GM10248 (cell line): ENCODE measurements at regions of chr6 and their contacts with region 1.

Region 1: GRCh38 chr6:127302728-127303660 is 36.3 kb downstream of the RNF146 start:
- DNase-seq: peak; percentile 42
- CTCF ChIP-seq: peak; percentile 76

Region 2: DNA sequence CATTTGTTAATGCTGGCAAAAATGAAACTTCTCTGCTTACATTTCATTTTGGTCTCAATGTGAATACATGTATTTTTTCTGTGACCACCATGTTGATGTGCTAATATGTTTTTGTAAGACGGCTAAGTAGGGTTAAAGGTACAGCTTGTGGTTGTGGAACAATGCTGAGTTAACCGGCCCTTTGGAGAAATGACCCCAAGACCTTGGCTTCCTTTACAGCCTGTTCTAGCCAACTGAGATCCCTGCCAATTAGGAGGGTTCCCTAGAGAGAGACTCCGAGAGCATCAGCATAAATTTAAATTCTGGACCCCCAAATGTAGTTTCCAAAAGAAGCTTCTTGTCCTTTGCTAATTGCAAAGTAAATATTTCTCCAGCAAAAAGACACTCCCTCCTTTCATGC is 140.2 kb before region 1 on chr6:
- CTCF ChIA-PET with region 1: no interaction called
- POLR2A ChIA-PET with region 1: no interaction called
- DNase-seq: no peak
- CTCF ChIP-seq: no peak

Region 3: DNA sequence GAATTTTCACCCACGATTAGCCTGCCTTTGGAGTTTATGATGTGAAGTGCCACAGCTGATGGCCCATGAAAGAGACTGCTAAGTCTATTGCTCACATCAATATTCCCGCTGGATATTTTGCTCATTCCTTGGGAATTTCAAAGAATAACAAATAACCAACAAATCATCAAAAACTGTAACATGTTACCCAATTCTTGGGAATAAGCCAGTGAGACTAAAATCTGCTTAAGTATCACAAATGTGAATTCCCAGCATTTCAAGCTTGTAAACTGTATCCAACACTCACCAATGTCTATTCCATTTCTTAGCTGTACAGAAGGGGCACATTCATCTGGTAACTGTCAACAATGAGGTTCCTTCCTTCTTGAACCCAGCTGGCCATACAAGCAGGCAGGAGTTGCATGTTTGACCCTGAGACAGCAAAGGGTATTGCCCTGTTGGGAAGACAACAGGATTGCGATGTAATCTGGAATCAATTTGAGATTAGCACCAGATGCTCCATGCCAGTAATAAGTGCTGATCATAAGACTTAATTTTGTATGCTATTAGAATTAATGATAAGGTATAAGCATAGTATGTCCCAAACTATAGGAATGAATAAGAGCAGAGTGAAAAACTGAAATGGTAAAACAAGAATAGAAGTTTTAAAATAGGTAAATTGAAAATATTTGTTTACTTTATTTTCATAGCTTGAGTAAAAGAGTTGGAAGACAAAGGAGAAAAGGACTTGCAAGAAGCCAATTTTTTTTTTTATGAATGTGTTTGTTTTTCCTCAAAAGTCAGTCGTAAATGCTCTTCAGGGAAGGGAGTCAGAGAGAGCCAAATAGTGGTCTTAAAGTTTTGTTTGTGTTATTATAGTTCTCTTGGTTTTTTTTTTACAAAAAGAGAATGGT is 125.7 kb before region 1 on chr6:
- CTCF ChIA-PET with region 1: no interaction called
- POLR2A ChIA-PET with region 1: no interaction called
- DNase-seq: no peak
- CTCF ChIP-seq: no peak

Region 4: DNA sequence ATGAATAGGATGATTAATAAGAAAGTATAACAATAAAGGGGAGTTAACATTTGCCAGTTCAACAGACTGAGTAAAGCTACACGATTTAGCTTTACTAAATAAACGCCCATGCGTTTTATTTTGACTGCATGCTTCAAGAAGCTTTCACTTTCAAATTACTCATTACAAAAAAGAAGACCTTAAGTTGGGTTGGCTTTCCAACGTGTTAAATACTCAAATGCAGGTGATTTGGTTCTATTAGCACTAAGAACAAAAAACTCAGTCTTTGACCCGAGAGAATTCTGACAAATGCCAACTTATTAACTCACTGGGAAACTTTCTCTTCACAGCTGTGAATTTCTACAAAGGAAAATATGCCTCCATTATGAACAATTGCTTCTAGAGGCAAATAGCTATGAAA is 11.5 kb before region 1 on chr6:
- CTCF ChIA-PET with region 1: interaction called, 68 read pairs
- POLR2A ChIA-PET with region 1: no interaction called
- DNase-seq: peak; percentile 22
- CTCF ChIP-seq: no peak

Region 5: DNA sequence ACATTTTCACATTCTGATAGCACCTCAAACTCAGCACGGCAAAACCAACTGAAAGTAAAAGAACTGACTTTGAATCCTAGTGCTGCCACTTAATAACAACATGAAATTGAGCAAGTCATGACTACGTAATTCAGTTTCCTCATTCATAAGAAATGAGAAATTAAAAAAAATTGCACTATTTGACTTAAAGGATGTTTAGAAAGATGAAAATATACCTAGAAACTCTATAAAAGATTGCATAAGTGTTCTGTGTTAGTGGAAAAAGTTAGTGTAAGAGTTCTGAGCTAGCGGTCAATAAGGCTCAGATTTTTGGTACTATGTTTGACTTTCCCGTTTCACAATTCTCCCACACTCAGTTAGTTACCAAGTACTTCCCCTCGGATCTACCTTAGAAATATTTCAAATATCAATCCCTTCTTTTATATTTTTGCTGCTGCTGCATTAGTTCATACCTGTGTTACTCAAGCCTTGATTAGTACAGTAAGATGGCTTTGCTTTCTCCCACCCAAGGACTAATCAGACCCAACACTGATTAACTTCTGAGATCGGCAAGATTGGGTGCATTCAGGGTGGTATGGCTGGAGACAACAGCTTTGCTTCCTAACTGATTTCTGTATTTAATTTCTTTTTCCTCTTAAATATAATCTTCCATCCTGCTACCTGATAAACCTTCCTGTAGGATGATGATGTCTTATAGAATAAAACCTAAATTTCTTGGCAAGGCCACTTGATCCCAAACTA is 14.6 kb after region 1 on chr6:
- CTCF ChIA-PET with region 1: interaction called, 60 read pairs
- POLR2A ChIA-PET with region 1: no interaction called
- DNase-seq: no peak
- CTCF ChIP-seq: no peak

Region 6: DNA sequence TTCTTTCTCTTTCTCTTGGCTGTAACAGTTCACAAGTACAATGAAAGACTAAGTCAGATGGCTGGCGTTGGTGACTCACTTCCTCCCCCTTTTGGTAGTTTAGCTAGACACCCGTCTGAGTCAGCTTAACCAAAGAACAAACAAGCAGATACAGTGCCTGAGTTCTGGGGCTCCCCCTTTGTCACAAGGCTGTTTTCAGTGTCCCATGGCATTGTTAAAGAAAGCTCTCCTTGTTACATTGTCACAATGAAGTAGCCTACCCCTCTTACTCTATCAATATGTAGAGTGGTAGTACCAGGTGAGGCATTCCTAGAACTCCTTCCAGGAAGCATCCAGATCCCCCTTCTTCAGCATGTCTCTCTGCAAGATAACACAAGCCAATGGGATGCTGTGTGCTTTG is 117.6 kb after region 1 on chr6:
- CTCF ChIA-PET with region 1: interaction called, 18 read pairs
- POLR2A ChIA-PET with region 1: no interaction called
- DNase-seq: peak; percentile 83
- CTCF ChIP-seq: peak; percentile 69

Region 7: GRCh38 chr6:127539272-127539671 is 236.3 kb after region 1 on chr6:
- CTCF ChIA-PET with region 1: interaction called, 21 read pairs
- POLR2A ChIA-PET with region 1: no interaction called
- DNase-seq: peak; percentile 31
- CTCF ChIP-seq: peak; percentile 42